ENCODE measurements at regions of chr10 and their contacts with region 1.

Region 1: DNA sequence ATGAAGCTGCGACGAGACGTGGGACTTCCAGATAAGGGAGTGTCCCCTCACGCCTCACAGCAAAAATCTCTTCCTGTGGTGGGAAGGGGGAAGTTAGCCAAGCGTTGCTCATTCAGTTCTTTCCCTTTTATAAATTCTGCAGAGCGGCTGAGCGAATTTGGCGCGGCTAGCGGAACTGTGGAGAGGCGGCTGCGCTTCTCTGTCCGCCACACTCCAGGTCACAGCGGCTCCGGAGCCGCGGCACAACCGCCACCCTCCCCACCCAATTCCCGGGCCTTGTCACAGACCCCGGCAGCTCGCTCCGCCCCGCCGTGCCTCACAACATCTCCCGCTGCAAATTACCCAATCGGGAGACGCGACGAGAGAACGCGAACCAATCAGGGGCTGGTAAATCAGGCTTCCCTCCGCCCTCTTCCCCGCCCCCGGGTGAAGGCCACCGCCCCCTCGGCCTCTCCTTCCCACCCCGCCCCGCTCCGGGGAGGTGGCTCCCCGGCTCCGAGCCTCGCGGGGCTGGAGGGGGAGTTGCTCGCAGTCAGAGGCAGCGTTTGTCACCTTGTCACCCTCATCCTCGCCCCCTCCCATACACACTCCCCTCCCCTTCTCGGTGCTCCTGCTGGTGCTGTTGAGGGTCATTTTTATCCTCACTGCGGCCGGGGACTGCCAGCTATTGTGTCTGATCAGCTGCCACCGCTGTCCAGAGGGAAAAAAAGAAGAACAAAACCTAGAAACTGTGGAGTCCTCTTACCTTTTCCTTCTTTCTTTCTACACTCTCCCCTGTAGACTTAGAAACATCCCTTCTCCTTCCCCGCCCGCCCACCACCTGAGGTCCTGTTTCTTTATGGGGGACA is 918 bp upstream of the ARHGAP21 start:
- DNase-seq: peak; percentile 92
- H3K4me3 Mint-ChIP-seq: peak overlapping the region; percentile 86
- H3K27ac Mint-ChIP-seq: peak overlapping the region; percentile 87
- H3K4me1 Mint-ChIP-seq: peaks cover 19% of the 10 kb centered on the region
- H3K27me3 Mint-ChIP-seq: peaks cover 4% of the 10 kb centered on the region

Region 2: DNA sequence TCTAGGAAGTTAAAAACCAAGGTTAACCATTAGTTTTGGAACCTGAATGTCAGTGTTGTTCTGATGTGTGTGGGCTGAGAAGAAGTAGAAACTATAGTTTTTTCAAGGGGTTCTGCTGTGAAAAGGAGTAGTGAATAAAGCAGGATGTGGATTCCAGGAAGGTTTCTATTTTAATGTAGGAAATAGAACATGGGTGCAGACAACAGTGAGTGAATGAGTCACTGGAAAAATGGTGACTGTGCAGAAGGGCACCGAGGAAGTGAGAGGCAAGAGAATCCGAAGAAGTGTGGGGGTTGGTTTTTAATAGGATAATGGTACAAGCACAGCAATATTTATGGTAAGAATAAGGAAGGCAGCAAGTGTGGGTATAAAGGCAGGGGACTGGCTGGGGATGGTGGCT is 121.3 kb before region 1 on chr10:
- intact Hi-C with region 1: loop called (anchors 5 kb)
- DNase-seq: no peak
- H3K4me3 Mint-ChIP-seq: no peak overlapping the region
- H3K27ac Mint-ChIP-seq: peak overlapping the region; percentile 83
- H3K4me1 Mint-ChIP-seq: peaks cover 33% of the 10 kb centered on the region
- H3K27me3 Mint-ChIP-seq: no peaks in the 10 kb centered on the region

Region 3: DNA sequence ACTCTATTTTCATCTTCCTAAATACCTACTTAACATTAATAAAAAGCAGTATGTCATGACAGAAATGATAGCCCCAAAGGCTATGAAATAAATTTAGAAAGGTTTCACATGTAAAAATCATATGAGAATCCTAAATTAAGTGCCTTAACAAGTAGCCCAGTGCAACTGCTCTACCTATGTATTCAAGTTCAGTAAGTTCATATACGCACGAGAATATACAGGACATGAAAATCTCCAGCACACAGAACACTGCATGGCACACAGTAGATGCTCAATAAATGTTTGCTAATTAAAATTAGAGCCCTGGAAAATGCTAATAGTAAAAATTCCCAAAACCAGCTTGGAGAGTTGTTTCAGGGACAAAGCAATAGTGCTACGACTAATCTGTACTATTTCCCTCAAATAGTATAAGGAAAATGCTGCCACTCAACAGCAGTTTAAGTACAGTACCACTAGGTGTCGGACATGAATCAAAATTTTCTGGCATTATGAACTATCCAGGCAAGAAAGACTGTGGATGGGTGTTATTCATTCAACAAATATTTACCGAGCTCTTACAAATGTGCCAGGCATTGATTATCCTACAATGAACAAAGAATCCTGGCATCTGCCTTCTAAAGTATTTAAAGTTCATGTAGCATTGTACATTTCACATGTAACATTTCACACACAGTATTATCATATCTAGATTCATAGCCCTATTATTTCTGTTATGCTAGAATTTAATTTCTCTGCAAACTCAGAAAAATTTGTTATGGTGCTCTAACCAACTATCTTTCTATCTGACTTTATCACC is 81.8 kb before region 1 on chr10:
- intact Hi-C with region 1: loop called (anchors 1 kb)
- DNase-seq: no peak
- H3K4me3 Mint-ChIP-seq: no peak overlapping the region
- H3K27ac Mint-ChIP-seq: no peak overlapping the region
- H3K4me1 Mint-ChIP-seq: peaks cover 6% of the 10 kb centered on the region
- H3K27me3 Mint-ChIP-seq: no peaks in the 10 kb centered on the region

Region 4: DNA sequence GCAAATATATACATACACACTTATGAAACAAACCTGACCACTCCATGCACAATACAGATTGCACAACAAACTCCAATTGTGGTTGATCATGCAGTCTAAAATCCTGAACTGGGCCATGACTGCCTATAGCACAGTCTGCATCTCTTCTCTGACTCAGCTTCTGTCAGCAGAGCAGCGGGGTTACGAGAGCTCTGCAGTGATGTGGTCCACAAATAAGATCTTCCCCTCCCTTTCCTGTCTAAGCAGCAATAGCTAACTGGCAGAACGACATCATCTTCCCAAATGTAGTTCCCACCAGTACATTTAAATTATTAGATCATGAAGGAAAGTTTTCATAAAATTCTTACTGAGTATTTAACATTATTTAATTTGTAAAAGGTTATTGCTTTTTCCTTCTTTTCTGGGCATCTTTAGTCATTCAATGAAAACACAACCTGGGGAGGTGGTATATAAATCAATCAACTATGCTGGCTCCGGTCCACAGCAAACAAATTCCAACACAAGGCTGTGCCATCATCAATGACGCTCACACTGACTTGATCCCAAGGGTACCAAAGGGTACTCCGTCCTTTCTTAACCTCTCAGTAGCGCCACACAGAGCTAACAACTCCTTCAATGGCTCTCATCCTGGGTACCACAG is 18.0 kb before region 1 on chr10:
- intact Hi-C with region 1: loop called (anchors 2 kb)
- DNase-seq: no peak
- H3K4me3 Mint-ChIP-seq: no peak overlapping the region
- H3K27ac Mint-ChIP-seq: no peak overlapping the region
- H3K4me1 Mint-ChIP-seq: peaks cover 13% of the 10 kb centered on the region
- H3K27me3 Mint-ChIP-seq: no peaks in the 10 kb centered on the region

Region 5: GRCh38 chr10:24901686-24902399 is 177.2 kb after region 1 on chr10:
- intact Hi-C with region 1: loop called (anchors 5 kb)
- DNase-seq: no peak
- H3K4me3 Mint-ChIP-seq: no peak overlapping the region
- H3K27ac Mint-ChIP-seq: peak overlapping the region; percentile 57
- H3K4me1 Mint-ChIP-seq: peaks cover 36% of the 10 kb centered on the region
- H3K27me3 Mint-ChIP-seq: no peaks in the 10 kb centered on the region

Region 6: DNA sequence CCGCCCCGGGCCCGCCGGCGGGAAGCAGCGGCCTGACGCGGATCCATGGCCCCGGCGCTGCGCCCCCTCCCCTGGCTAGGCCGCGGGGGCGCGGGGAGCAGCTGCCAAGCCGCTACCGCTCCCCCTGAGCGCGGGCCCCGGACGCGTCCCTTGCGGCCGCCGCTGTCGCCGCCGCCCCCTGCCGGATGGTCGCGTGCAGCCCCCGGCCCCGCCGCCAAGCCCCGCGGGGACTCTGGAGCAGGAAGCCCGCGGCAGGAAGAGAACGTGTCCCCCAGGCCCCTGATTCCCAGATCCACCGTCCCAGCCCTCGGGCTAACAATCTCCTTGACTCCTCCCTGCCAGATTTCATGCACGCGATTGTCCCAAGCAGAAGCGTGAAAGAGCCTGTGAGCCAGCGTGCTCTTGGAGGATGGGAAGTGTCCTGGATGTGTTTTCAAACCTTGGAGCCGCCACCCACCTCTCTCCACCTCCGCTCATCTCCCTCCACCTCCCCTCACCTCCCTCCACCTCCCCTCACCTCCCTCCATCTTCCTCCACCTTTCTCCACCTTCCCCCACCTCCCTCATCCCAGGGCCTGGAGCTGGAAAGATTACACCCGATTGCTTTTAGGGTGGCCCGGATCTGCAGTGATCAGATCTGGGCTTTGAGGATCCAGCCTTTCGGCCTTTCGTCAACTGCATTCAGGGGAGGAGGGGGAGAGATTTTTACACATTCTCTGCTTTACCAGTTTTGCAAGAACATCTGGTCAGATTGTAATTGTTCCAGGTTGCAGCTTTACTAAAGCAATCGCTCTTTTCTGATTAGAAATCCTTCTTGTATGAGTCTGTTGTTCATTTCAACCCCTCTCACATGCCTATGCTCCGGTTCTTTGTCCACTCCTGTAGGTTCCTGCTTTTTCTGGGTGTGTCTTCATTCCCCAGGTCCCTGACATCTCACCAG is 228.4 kb after region 1 on chr10:
- intact Hi-C with region 1: loop called (anchors 1 kb)
- DNase-seq: peak; percentile 15
- H3K4me3 Mint-ChIP-seq: peak overlapping the region; percentile 64
- H3K27ac Mint-ChIP-seq: peak overlapping the region; percentile 29
- H3K4me1 Mint-ChIP-seq: peaks cover 9% of the 10 kb centered on the region
- H3K27me3 Mint-ChIP-seq: peaks cover 10% of the 10 kb centered on the region

Region 7: DNA sequence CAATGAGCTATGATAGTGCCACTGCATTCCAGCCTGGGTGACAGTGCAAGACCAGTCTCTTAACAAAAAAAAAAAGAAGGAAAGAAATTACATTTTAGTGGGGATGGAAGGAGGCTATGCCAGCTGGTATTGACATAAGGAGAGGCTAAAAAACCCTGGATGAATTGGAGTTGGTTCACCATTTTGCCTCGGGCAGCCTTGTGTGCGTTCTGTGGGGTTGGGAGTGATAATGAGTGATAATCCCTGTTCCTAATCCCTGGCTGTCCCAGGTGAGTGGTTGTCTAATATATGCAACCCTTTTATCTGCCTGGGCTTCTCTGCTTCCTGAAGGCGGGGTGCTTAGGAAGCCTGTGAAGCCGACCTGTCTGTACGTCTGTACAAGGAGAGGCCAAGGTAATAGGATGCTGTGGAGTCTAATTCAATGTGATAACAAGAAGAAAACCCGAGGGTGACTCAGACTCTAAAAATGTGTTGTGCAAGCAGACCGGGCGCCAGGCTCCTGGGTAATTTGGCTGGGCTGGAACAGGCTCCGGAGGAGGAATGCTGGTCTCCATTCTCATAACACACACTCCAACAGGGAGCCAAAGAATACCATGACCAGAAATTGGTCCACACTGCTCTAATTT is 335.3 kb after region 1 on chr10:
- intact Hi-C with region 1: loop called (anchors 5 kb)
- DNase-seq: no peak
- H3K4me3 Mint-ChIP-seq: no peak overlapping the region
- H3K27ac Mint-ChIP-seq: no peak overlapping the region
- H3K4me1 Mint-ChIP-seq: peaks cover 18% of the 10 kb centered on the region
- H3K27me3 Mint-ChIP-seq: no peaks in the 10 kb centered on the region

Measured in activated T-helper 2 cell treated with anti-CD3 and anti-CD28 coated beads, Interferon-gamma antibody, Interleukin-2, Interleukin-4, amounts not matched to agents 10 μg/mL and 5 μg/mL and 100 μg/mL, durations not matched to agents 14 hours and 24 hours and 36 hours (primary cell).